Cardiac septum (tissue), 1 donor: ENCODE measurements at regions of chr15 and their contacts with region 1.

Region 1: DNA sequence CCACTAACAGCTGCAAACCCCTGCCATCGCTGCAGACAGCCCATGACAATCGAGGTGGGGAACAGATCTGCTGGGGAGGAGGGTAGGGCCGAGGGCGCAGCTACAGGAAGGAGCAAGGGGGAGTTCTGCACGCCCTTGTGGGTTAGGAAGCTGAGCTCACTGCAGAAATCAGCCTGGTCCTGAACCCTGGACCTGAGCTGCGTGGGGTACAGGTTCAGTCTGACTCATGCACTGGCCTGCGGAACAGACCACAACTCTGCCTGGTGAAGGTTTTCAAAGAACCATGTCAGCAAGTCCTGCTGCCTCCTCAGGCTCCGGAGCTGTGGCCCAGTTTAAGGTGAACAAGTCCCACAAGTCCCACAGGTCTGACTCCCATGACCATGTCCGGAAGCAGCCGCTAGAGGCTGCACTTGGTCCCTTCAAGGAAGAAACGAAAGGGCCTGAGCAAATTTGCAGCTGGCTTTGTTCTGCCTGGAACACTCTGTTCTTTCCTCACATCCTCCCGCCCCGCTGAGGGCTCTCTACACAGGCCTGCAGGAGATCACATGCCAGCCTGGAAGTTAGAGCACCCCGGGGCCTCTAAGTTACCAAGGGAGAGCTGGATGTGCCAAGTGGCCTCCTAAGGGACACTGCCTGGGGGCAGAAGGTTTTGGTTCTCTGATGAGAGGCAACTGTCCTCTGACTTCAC is 49.4 kb upstream of the AKAP13 start:
- DNase-seq: peak; percentile 90

Region 2: GRCh38 chr15:85274315-85275233 is 56.5 kb before region 1 on chr15:
- intact Hi-C with region 1: no loop called
- DNase-seq: peak; percentile 53

Region 3: GRCh38 chr15:85421116-85421925 is 90.3 kb after region 1 on chr15:
- intact Hi-C with region 1: loop called (anchors 5 kb)
- DNase-seq: no peak

Region 4: DNA sequence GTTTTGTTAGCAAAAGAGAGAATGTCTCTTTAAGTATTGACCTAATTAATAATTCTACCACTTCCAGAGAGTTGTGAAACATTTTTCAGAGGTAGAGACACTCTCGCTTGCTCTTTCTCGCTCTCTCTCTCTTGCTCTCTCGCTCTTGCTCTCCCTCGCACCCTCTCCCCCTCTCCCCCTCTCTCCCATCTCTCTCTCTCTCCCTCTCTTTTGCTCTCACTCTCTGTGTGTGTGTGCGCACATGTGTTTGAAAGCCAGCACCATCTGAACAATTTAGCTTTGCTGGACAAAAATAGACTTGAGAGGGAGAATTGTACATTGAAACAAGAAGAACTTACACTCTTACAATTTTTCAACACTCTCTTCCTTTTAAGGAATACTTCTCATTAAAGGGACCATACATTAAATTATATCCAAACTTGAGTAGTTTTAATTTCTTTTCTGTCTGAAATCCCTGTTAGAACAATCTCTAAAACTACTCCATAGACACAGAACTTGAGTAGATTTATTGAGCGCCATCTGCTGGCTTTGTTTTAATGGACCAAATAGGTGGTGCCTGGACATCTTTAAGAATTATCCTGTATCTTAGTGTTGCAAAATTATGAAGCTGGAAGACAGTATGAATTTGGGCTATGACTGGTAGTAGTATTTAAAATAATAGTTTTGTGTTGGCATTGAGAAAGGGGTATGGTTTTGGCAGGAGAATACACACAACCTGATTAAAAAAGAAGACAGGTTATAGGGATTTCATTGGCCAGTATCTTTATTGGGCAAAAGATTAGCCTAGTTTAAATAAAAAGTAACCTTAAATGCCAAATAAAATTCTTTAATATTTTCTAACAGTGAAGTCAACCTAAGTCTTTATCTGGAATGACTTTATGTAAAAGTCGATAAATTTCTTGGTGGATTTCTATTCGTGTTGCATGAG is 174.0 kb after region 1 on chr15:
- intact Hi-C with region 1: loop called (anchors 2 kb)
- DNase-seq: no peak

Region 5: GRCh38 chr15:85582131-85583079 is 251.4 kb after region 1 on chr15:
- intact Hi-C with region 1: loop called (anchors 5 kb)
- DNase-seq: peak; percentile 91

Region 6: DNA sequence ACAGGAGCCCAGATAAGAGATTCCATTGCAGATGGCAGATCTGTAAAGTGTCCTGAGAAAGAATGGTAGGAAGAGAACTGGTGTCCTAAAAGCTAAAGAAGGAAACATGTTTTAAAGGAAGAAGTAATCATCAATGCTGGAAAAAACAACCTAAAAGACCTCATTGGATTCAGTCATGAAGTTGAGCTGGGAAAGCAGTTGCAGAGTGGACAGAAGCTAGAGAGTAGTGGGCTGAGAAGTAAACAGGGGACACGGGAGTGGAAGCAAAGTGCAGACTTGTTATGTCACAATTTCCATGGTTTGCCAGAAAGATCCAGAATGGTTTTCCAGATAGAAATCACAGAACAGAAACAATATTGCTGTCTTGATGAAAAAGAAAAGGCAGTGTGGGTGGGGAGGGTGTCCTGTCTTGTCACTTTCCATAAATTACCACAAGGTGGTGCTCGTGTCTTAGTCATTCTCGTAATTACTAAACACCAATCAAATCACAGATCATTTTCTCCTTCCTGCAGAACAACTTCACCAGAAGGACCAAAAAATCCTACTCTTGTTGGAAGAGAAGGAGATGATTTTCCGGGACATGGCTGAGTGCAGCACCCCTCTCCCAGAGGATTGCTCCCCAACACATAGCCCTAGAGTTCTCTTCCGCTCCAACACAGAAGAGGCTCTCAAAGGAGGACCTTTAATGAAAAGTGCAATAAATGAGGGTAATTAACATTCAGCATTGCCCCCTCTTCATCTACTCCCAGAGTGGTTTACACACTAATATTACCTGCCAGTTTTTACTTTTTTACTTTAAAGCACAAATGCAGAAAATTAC is 399.2 kb after region 1 on chr15:
- intact Hi-C with region 1: loop called (anchors 10 kb)
- DNase-seq: no peak

Region 7: DNA sequence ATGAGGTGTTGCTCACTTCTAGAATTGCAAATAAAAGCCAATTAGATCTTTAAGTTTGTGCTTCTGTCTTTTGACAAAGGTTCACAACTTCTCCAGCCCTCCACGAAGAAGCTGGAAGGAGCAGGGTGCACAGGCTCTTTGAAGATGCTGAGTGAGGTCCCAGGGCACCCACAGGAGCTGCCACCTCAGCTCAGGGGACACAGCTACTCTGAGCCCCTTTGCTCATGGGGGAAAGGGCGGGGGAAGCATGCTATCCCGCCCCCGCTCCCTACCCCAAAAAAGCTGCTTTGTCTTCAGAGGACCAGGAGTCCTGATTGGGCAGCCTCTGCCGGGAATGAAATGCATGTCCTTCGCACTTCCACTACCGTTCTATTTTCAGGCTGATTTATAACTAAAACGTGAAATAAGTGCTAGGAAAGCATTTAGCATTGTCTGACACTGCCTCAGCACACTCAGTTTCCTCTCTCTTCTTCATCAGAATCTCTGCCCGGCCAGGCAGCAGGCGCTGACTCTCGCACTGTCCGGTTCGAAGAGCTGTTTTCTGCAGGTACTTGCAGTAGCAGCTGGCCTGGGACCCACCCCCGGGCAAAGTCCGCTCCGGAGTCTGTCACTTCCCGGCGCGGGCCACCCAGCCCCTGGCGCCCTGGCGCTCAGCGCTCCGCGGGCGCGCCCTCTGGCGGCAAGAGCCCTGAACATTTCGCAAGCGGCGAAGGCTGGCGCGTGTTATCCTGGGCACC is 509.2 kb after region 1 on chr15:
- intact Hi-C with region 1: loop called (anchors 10 kb)
- DNase-seq: peak; percentile 91